AG04450 (cell line): ENCODE measurements at regions of chr5 and their contacts with region 1.

Region 1: DNA sequence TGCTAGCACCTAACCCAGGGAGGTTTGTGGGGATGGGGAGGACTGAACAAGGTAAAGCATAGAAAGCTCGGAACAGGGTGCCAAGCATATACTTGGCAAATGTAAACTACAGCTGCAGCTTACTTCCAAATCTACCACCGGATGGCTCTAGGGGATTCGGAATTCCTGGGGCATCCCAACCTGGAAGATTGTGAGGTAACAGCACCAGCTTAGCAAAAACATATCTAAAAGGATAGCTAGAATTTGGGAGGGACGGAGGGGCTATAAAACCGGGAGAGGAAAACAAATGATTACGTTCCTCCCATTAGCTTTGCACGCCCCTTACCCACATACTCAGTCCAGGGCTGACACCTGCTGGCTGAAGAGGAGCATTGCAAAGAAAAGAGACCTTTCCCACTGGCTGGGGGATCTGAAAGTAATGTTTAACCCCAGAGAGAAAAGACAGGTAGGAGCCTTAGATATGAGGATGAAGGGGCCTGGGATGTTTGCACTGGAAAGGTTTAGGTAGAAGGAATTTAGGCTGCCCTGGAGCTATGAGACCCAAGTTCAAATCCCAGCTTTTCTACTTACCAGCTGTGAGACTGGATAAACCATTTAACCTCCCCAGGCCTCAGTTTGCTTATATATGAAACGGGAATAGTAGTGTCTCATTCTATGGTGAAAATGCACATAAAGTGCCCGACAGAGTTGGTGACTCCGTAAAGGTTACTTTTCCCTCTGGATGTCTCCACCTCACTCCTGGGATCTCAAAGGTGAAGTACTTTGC is 73.6 kb downstream of the FAM114A2 start:
- DNase-seq: peak; percentile 21
- H3K4me3 ChIP-seq: no peak overlapping the region; the same call in 1 of the 2 replicates
- H3K27ac ChIP-seq: no peak overlapping the region
- H3K27me3 ChIP-seq: peaks cover 6% of the 10 kb centered on the region
- CTCF ChIP-seq: peak; percentile 93

Region 2: DNA sequence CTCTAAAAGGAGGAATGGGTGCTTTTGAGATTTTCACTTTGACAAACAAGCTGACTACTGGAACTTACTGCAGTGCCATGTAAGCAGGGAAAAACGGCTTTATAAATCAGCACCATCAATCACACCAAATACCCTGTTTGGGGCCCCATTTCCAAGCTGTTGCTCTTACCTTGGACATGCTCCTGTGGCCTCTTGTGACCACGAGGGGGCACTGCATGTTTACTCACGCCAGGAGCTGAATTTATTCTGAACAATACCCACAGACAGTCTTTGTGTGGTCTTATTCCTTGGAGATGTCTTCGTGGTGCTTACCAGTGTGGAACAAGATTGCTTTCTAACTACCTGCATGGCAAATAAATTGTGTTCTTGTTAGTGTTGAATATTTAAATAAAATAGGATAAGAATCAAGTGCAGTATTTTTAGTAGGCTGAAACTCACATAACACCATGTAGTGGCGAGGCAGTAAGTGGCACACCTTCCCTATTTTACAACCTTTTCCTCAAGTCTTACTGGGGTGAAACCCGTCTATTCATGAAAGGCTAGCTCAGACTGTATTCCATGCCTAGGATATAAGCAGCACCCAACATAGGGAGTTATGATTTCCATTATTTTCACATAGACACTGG is 1404.4 kb before region 1 on chr5:
- CTCF ChIA-PET with region 1: interaction called, 23 read pairs
- POLR2A ChIA-PET with region 1: no interaction called
- DNase-seq: no peak
- H3K4me3 ChIP-seq: no peak overlapping the region
- H3K27ac ChIP-seq: no peak overlapping the region
- H3K27me3 ChIP-seq: no peaks in the 10 kb centered on the region
- CTCF ChIP-seq: peak; percentile 56

Region 3: GRCh38 chr5:153756540-153756939 is 208.5 kb before region 1 on chr5:
- CTCF ChIA-PET with region 1: interaction called, 10 read pairs
- POLR2A ChIA-PET with region 1: no interaction called
- DNase-seq: no peak
- H3K4me3 ChIP-seq: no peak overlapping the region
- H3K27ac ChIP-seq: no peak overlapping the region
- H3K27me3 ChIP-seq: no peaks in the 10 kb centered on the region
- CTCF ChIP-seq: peak; percentile 11; the same call in 1 of the 2 replicates

Region 4: DNA sequence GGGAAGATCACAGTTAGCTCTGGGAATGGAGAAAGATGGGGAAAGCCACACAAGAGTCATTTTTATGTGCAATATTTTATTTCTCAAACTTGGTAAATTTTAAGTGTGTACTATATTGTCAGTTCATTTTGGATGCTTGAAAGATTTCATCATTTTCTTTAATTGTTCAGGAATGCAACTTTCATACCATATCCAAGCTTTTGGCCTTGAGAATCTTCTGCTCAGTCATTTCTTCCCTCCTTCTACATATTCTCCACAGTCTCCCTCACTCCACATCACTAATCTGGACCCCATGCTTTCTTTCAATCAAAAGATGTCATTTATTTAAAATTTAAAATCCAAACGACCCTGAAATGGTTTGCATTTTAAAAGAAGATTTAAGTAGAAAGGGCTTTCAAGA is 61.7 kb before region 1 on chr5:
- CTCF ChIA-PET with region 1: interaction called, 10 read pairs
- POLR2A ChIA-PET with region 1: no interaction called
- DNase-seq: no peak
- H3K4me3 ChIP-seq: no peak overlapping the region
- H3K27ac ChIP-seq: no peak overlapping the region
- H3K27me3 ChIP-seq: no peaks in the 10 kb centered on the region
- CTCF ChIP-seq: no peak